Prostate gland (tissue), 2 donors: ENCODE measurements at regions of chr16 and their contacts with region 1.

Region 1: DNA sequence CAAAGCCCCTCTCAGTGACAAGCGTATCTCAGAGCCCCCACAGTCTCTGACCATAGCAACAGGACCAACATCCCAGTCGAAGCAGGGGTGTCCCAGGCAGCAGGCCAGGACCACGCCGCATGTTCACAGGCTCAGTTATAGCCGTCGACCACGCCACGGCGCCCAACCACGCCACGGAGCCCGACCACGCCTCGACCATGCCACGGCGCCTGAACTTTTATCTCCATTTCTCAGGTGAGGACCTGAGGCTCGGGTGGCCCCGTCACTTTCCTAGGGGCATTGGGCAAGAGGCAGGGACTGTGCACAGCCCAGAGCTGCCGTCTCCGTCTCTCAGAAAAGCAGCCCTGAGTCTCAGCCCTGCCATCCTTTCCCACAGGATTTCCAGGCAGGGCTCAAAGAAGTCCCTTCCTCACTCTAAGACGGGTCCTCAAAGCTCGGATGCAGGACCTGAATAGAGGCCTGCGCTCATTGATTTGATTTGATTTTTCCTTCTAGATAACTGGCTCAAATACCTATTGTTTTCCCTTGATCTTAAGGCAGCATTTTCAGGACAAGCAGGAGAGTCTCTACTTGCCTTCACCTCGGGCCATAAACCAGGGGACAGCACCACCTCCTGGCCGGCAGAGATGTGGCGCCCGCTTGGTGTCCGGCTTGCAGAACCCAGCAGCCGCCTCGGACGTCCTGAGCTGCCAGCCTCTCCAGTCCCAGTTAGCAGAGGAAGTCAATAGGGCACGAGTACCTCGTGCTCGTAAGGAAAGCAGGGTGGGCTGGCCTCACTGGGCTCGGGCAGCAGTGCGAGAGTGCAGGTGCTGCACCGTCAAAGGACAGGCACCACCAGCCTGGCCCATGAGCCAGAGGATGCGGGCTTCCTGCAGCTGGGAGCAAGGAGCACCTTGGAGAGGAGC is 38.7 kb downstream of the C16orf95 start:
- DNase-seq: peak; percentile 74
- H3K4me3 ChIP-seq: no peak overlapping the region
- H3K27ac ChIP-seq: no peak overlapping the region
- H3K4me1 ChIP-seq: no peaks in the 10 kb centered on the region
- H3K27me3 ChIP-seq: peaks cover 3% of the 10 kb centered on the region
- CTCF ChIP-seq: peak; percentile 63 to 86 (median 83)
- POLR2A ChIP-seq: no peak

Region 2: GRCh38 chr16:87062569-87063442 is 215.6 kb before region 1 on chr16:
- intact Hi-C with region 1: loop called (anchors 10 kb)
- DNase-seq: peak; percentile 19
- H3K4me3 ChIP-seq: no peak overlapping the region
- H3K27ac ChIP-seq: no peak overlapping the region
- H3K4me1 ChIP-seq: no peaks in the 10 kb centered on the region
- H3K27me3 ChIP-seq: peaks cover 8% of the 10 kb centered on the region
- CTCF ChIP-seq: peak; percentile 36 to 87 (median 60)
- POLR2A ChIP-seq: no peak